IMR-90 (cell line): ENCODE measurements at regions of chr1 and their contacts with region 1.

Region 1: DNA sequence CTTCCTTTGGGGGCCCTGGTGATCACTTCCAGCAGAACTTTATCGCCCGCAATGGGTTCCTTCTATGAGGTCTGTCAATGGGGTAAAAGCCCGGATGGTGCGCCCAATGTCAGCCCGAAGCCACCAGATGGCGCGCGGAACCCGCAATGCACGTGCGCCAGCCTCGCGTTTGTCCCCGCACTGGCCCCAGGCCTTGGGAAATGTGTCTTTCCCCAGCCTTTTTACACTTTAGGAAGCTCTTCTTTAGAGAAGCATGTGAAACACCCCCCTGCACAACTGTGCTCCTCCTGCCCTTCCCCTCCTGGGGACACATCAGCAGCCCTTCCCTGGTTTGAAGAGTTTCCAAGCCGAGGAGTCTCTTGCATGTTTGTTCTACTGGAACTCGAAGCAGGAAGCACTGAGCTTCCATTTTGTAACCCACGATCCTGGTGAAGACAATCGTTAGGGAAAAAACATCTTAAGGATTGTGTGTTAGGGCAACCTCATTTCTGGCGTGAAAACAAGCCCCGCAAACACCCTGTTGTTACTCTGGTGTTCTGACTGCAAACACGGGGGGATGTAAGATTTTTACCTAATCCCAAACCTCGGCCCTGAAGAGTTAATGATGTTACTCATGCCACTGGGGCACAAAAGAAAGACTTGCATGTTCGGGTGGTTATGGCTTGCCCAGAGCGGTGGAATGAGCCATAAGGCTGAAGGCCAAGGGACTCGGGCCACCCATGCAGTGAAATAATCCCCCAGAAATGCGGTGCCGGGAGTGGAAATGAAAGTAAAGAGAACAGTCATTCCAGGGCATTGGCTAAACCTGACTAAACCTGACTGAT is 20.4 kb upstream of the TARBP1 start:
- DNase-seq: peak; percentile 86
- ATAC-seq: peak; percentile 78
- H3K4me3 ChIP-seq: peak overlapping the region; percentile 10; the same call in 1 of the 2 replicates
- H3K27ac ChIP-seq: peak overlapping the region; percentile 89
- H3K4me1 ChIP-seq: peaks cover 25% of the 10 kb centered on the region
- H3K27me3 ChIP-seq: no peaks in the 10 kb centered on the region
- CTCF ChIP-seq: peak; percentile 96
- POLR2A ChIP-seq: peak; percentile 73
- RAD21 ChIP-seq: peak; percentile 99

Region 2: GRCh38 chr1:234235434-234235881 is 263.9 kb before region 1 on chr1:
- CTCF ChIA-PET with region 1: no interaction called
- POLR2A ChIA-PET with region 1: no interaction called
- dilution Hi-C with region 1: no loop called
- in situ Hi-C with region 1: no loop called
- intact Hi-C with region 1: no loop called
- DNase-seq: no peak
- ATAC-seq: no peak
- H3K4me3 ChIP-seq: no peak overlapping the region
- H3K27ac ChIP-seq: no peak overlapping the region
- H3K4me1 ChIP-seq: no peaks in the 10 kb centered on the region
- H3K27me3 ChIP-seq: peaks cover 3% of the 10 kb centered on the region; the same call in 1 of the 2 replicates
- CTCF ChIP-seq: no peak
- POLR2A ChIP-seq: no peak
- RAD21 ChIP-seq: no peak

Region 3: GRCh38 chr1:234515821-234516241 is 16.5 kb after region 1 on chr1:
- CTCF ChIA-PET with region 1: no interaction called
- POLR2A ChIA-PET with region 1: no interaction called
- dilution Hi-C with region 1: no loop called
- in situ Hi-C with region 1: no loop called
- intact Hi-C with region 1: loop called (anchors 2 kb)
- DNase-seq: peak; percentile 61
- ATAC-seq: peak; percentile 44; the same call in 1 of the 2 replicates
- H3K4me3 ChIP-seq: no peak overlapping the region
- H3K27ac ChIP-seq: peak overlapping the region; percentile 26; the same call in 1 of the 2 replicates
- H3K4me1 ChIP-seq: peaks cover 9% of the 10 kb centered on the region
- H3K27me3 ChIP-seq: no peaks in the 10 kb centered on the region
- CTCF ChIP-seq: no peak
- POLR2A ChIP-seq: no peak
- RAD21 ChIP-seq: no peak

Region 4: GRCh38 chr1:234610348-234611152 is 111.2 kb after region 1 on chr1:
- CTCF ChIA-PET with region 1: interaction called, 3 read pairs
- POLR2A ChIA-PET with region 1: no interaction called
- dilution Hi-C with region 1: no loop called
- in situ Hi-C with region 1: loop called (anchors 5 kb)
- intact Hi-C with region 1: loop called (anchors 1 kb)
- DNase-seq: peak; percentile 95
- ATAC-seq: peak; percentile 74
- H3K4me3 ChIP-seq: peak overlapping the region; percentile 76
- H3K27ac ChIP-seq: peak overlapping the region; percentile 98
- H3K4me1 ChIP-seq: peaks cover 14% of the 10 kb centered on the region
- H3K27me3 ChIP-seq: no peaks in the 10 kb centered on the region
- CTCF ChIP-seq: peak; percentile 7; the same call in 1 of the 2 replicates
- POLR2A ChIP-seq: peak; percentile 98
- RAD21 ChIP-seq: peak; percentile 20

Region 5: GRCh38 chr1:234963180-234963903 is 464.0 kb after region 1 on chr1:
- CTCF ChIA-PET with region 1: no interaction called
- POLR2A ChIA-PET with region 1: no interaction called
- dilution Hi-C with region 1: no loop called
- in situ Hi-C with region 1: no loop called
- intact Hi-C with region 1: loop called (anchors 2 kb)
- DNase-seq: peak; percentile 95
- ATAC-seq: peak; percentile 33
- H3K4me3 ChIP-seq: no peak overlapping the region
- H3K27ac ChIP-seq: peak overlapping the region; percentile 90
- H3K4me1 ChIP-seq: peaks cover 21% of the 10 kb centered on the region
- H3K27me3 ChIP-seq: no peaks in the 10 kb centered on the region
- CTCF ChIP-seq: no peak
- POLR2A ChIP-seq: no peak
- RAD21 ChIP-seq: no peak; the same call in 1 of the 2 replicates

Region 6: DNA sequence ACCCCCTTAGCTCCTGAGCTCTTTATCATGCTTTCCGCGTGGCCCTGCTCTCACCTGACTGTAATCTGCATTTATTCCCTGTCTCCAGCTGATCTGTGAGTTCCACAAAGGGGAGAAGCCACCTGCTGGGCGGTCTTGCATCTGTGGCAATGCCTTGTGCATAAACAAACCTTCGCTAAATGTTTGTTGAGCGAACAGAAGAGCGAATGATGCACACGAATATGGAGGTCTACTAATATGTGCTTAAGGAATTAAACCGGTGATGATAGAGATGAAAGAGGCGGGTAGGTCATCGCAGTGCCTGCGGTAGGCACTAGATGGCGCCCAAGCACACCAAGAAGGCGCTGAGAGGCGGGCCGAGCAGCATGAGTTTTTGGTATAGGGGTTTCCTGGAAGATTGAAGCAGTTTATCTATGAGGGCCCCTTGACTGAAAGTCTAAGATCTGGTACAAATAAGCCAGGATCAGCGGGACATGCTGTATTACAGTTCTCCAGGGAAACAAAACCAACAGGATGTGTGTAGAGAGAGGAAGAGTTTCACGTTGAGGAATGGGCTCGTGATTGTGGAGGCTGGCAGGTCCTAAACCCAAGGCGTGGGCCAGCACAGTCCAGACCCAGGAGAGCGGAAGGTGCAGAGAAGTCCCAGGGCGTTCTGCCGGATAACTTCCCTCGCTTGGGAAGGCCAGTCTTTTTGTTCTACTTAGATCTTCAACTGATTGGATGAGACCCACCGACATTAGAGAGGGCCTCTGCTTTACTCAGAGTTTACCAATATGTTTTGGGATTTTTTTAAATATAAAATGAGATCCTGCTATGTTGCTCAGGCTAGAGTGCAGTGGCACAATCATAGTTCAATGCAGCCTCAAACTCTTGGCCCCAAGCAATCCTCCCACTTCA is 594.6 kb after region 1 on chr1:
- CTCF ChIA-PET with region 1: no interaction called
- POLR2A ChIA-PET with region 1: no interaction called
- dilution Hi-C with region 1: no loop called
- in situ Hi-C with region 1: loop called (anchors 5 kb)
- intact Hi-C with region 1: loop called (anchors 1 kb)
- DNase-seq: peak; percentile 55
- ATAC-seq: peak; percentile 91
- H3K4me3 ChIP-seq: no peak overlapping the region
- H3K27ac ChIP-seq: no peak overlapping the region
- H3K4me1 ChIP-seq: peaks cover 11% of the 10 kb centered on the region
- H3K27me3 ChIP-seq: no peaks in the 10 kb centered on the region
- CTCF ChIP-seq: peak; percentile 87
- POLR2A ChIP-seq: no peak
- RAD21 ChIP-seq: peak; percentile 72